PC-3 (cell line): ENCODE measurements at regions of chr14 and their contacts with region 1.

Region 1: DNA sequence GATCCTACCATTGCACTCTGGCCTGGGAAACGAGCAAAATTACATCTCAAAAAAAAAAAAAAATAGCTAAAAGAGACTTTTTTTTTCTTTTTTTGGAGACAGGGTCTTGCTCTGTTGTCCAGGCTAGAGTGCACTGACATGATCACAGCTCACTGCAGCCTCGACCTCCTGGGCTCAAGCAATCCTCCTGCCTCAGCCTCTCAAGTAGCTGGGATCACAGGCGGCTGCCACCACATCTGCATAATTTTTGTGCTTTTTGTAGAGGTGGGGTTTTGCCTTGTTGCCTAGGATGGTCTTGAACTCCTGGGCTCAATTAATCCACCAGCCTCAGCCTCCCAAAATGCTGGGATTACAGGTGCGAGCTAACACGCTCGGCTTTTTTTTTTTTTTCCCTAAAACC is 11.3 kb downstream of the RALGAPA1 start:
- DNase-seq: no peak
- ATAC-seq: no peak
- H3K4me3 ChIP-seq: no peak overlapping the region
- H3K27ac ChIP-seq: no peak overlapping the region
- H3K4me1 ChIP-seq: no peaks in the 10 kb centered on the region
- H3K27me3 ChIP-seq: no peaks in the 10 kb centered on the region
- CTCF ChIP-seq: no peak

Region 2: DNA sequence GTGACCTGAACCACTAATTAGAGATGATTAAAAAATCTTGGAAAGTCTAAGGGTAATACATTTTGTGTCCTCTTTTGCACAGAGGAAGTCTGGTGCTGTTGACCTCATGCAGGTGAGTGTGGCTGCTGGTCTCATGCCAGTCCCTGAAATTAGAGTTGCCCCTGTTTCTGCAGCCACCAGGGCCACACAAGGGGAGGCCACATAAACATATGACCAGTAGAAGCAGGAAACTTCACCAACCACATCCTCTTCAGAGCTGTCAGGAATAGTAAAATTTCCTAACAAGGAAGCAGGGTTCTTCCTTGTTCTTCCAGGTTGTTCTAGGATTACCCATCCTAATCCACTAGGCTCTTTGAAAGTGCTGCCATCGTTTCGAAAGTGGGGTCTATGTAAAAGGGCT is 477.3 kb before region 1 on chr14:
- CTCF ChIA-PET with region 1: no interaction called
- POLR2A ChIA-PET with region 1: interaction called, 13 read pairs
- intact Hi-C with region 1: no loop called
- DNase-seq: no peak
- ATAC-seq: peak; percentile 42; the same call in 1 of the 2 replicates
- H3K4me3 ChIP-seq: no peak overlapping the region
- H3K27ac ChIP-seq: no peak overlapping the region
- H3K4me1 ChIP-seq: no peaks in the 10 kb centered on the region
- H3K27me3 ChIP-seq: no peaks in the 10 kb centered on the region
- CTCF ChIP-seq: no peak

Region 3: GRCh38 chr14:35712466-35712865 is 85.3 kb before region 1 on chr14:
- CTCF ChIA-PET with region 1: no interaction called
- POLR2A ChIA-PET with region 1: no interaction called
- intact Hi-C with region 1: no loop called
- DNase-seq: no peak
- ATAC-seq: no peak
- H3K4me3 ChIP-seq: no peak overlapping the region
- H3K27ac ChIP-seq: no peak overlapping the region
- H3K4me1 ChIP-seq: no peaks in the 10 kb centered on the region
- H3K27me3 ChIP-seq: no peaks in the 10 kb centered on the region
- CTCF ChIP-seq: no peak

Region 4: DNA sequence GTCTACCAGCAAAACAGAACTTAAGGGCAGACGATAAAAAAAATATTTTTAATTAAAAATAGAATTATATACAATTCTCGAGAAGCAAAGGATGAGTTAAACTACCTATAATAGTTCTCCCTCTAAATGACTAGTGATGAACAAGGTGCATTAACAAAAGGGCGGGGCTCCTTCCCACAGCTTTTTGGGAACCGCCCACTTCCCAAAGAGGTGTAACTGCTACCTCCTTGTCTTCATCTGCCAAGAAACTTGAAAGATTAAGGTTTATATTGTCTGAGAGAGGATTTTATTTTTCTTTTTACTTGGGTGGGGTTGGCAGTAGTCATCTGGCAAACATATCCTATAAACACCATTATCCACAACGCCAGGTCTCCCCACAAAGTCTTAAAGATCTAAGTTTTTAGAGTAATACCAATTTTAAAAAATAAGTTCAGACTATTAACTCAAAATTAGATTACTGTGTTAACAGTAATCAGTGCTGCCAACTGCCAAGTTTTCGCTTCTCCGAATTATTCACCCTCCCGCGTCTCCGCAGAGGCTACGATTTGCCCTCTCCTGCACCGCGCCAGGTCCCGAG is 10.4 kb after region 1 on chr14:
- CTCF ChIA-PET with region 1: no interaction called
- POLR2A ChIA-PET with region 1: interaction called, 14 read pairs
- intact Hi-C with region 1: no loop called
- DNase-seq: peak; percentile 67
- ATAC-seq: peak; percentile 41
- H3K4me3 ChIP-seq: peak overlapping the region; percentile 71
- H3K27ac ChIP-seq: peak overlapping the region; percentile 57
- H3K4me1 ChIP-seq: peaks cover 17% of the 10 kb centered on the region
- H3K27me3 ChIP-seq: no peaks in the 10 kb centered on the region
- CTCF ChIP-seq: no peak